Gastrocnemius medialis (tissue), 4 donors: ENCODE measurements at regions of chr22 and their contacts with region 1.

Region 1: DNA sequence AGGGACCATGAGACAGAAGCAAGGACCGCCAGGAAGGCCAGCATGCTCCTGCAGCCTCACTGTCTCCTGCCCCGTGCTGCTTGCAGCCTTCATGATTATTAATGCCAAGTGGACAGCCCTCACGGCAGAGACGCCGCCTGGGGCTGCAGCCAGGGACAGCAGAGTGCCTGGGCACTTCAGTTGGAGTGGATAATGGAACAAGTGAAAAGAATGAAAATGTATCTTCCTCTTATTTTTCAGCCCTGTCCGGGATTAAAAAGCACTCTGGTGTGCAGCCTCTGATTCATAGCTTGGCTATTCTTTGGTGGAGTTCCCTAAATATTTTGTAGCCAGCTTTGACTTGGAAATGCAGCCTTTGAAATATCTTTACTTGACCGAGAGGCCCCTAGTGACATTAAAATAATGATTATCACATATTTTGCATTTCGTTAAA is 1404.2 kb downstream of the BRD1 start:
- DNase-seq: no peak
- ATAC-seq: no peak
- H3K4me3 ChIP-seq: no peak overlapping the region
- H3K27ac ChIP-seq: no peak overlapping the region
- H3K4me1 ChIP-seq: no peaks in the 10 kb centered on the region
- H3K27me3 ChIP-seq: no peaks in the 10 kb centered on the region
- CTCF ChIP-seq: no peak
- POLR2A ChIP-seq: no peak

Region 2: DNA sequence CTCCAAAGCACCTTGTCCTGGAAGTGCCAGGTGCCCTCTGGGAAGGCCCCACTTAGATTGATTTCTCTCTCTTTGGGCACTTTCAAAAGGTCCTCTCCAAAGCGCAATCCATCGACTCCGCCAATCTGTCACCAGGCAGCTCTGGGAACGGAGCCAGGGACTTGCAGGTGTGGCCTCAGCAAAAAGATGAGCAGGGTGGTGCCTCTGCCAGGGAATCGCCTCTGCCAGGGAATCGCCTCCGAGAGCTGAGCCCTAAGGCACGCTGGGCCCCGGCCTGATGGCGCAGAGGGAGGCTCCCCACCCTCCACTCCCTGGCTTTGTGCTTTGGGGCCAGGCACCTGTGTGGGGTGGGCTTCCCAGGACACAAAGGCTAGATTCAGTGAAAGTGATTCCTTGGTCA is 269.8 kb before region 1 on chr22:
- in situ Hi-C with region 1: no loop called
- intact Hi-C with region 1: no loop called
- DNase-seq: no peak
- ATAC-seq: no peak
- H3K4me3 ChIP-seq: no peak overlapping the region
- H3K27ac ChIP-seq: no peak overlapping the region
- H3K4me1 ChIP-seq: no peaks in the 10 kb centered on the region
- H3K27me3 ChIP-seq: no peaks in the 10 kb centered on the region
- CTCF ChIP-seq: no peak
- POLR2A ChIP-seq: no peak

Region 3: GRCh38 chr22:48320683-48321451 is 102.6 kb before region 1 on chr22:
- in situ Hi-C with region 1: loop called in 1 of 4 experiments (anchors 25 kb)
- intact Hi-C with region 1: no loop called
- DNase-seq: no peak
- ATAC-seq: no peak
- H3K4me3 ChIP-seq: no peak overlapping the region
- H3K27ac ChIP-seq: no peak overlapping the region
- H3K4me1 ChIP-seq: no peaks in the 10 kb centered on the region
- H3K27me3 ChIP-seq: no peaks in the 10 kb centered on the region
- CTCF ChIP-seq: no peak
- POLR2A ChIP-seq: no peak

Region 4: GRCh38 chr22:48517039-48518030 is 93.8 kb after region 1 on chr22:
- in situ Hi-C with region 1: loop called in 1 of 4 experiments (anchors 25 kb)
- intact Hi-C with region 1: no loop called
- DNase-seq: no peak
- ATAC-seq: no peak
- H3K4me3 ChIP-seq: no peak overlapping the region
- H3K27ac ChIP-seq: no peak overlapping the region
- H3K4me1 ChIP-seq: no peaks in the 10 kb centered on the region
- H3K27me3 ChIP-seq: no peaks in the 10 kb centered on the region
- CTCF ChIP-seq: no peak
- POLR2A ChIP-seq: no peak